Activated naive CD4-positive, alpha-beta T cell treated with anti-CD3 and anti-CD28 coated beads for 36 hours (primary cell): ENCODE measurements at regions of chr17 and their contacts with region 1.

Region 1: GRCh38 chr17:78378225-78379130 is at the start of gene PGS1:
- DNase-seq: peak; percentile 86
- H3K4me3 Mint-ChIP-seq: peak within 1 kb of the TSS; percentile 93
- H3K27ac Mint-ChIP-seq: peak within 1 kb of the TSS; percentile 99
- H3K4me1 Mint-ChIP-seq: peaks cover 63% of the 10 kb centered on the region
- H3K27me3 Mint-ChIP-seq: no peaks in the 10 kb centered on the region
- total RNA-seq, gene PGS1: 69.0 to 73.1 TPM

Region 2: GRCh38 chr17:78231991-78232858 is 146.3 kb before region 1 on chr17:
- CTCF ChIA-PET with region 1: no interaction called
- intact Hi-C with region 1: no loop called
- DNase-seq: peak; percentile 46
- H3K4me3 Mint-ChIP-seq: no peak overlapping the region
- H3K27ac Mint-ChIP-seq: no peak overlapping the region
- H3K4me1 Mint-ChIP-seq: peaks cover 7% of the 10 kb centered on the region
- H3K27me3 Mint-ChIP-seq: peaks cover 26% of the 10 kb centered on the region

Region 3: DNA sequence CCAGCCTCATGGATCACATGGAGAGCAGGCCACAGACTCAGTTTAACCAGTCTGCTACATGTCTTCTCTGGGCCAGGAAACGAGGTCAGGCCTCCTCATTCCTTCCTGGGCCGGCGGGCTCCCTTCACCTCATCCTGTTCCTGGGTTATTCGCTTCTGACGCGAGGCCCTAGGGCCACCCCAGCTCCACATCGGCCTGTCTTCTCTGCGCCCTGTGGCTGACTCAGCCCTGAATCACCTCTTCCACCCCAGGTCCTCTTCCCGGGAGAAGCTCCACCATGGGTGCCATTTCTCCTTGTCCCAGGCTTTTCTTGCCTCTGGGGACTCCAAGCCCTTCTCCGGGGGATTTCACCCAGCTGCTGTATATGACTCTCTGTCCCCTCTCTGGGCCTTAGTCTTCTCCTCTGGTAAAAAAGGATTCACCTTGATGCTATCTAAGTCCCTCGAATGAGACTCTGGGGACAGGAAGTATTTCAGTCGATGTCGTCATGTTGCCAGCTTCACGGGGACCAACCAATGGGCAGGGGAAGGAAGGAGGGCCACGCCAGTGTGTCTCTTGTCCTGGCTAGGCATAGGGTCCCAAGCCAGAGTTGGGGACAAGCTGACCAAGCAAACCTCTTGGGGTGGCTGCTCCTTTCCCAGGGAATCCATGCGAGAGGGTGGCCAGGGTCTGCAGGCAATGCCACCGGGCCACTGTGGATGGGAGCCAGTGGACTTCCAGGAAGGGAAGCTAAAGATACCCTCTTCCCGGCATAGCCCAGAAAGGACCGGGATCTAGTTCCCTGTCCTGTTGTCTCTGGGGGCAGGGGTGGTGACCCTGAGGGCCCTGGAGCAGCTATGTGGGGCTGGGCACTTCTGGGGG is 77.3 kb before region 1 on chr17:
- CTCF ChIA-PET with region 1: no interaction called
- intact Hi-C with region 1: no loop called
- DNase-seq: peak; percentile 14
- H3K4me3 Mint-ChIP-seq: no peak overlapping the region
- H3K27ac Mint-ChIP-seq: no peak overlapping the region
- H3K4me1 Mint-ChIP-seq: peaks cover 10% of the 10 kb centered on the region
- H3K27me3 Mint-ChIP-seq: no peaks in the 10 kb centered on the region

Region 4: GRCh38 chr17:78324391-78325075 is 53.9 kb before region 1 on chr17:
- CTCF ChIA-PET with region 1: no interaction called
- intact Hi-C with region 1: no loop called
- DNase-seq: peak; percentile 61
- H3K4me3 Mint-ChIP-seq: no peak overlapping the region
- H3K27ac Mint-ChIP-seq: peak overlapping the region; percentile 61
- H3K4me1 Mint-ChIP-seq: peaks cover 22% of the 10 kb centered on the region
- H3K27me3 Mint-ChIP-seq: no peaks in the 10 kb centered on the region

Region 5: GRCh38 chr17:78365561-78366108 is 12.8 kb before region 1 on chr17:
- CTCF ChIA-PET with region 1: interaction called, 35 read pairs
- intact Hi-C with region 1: loop called (anchors 1 kb)
- DNase-seq: no peak
- H3K4me3 Mint-ChIP-seq: no peak overlapping the region
- H3K27ac Mint-ChIP-seq: no peak overlapping the region
- H3K4me1 Mint-ChIP-seq: peaks cover 32% of the 10 kb centered on the region
- H3K27me3 Mint-ChIP-seq: peaks cover 5% of the 10 kb centered on the region

Region 6: GRCh38 chr17:78598013-78598471 is 219.6 kb after region 1 on chr17:
- CTCF ChIA-PET with region 1: no interaction called
- intact Hi-C with region 1: no loop called
- DNase-seq: no peak
- H3K4me3 Mint-ChIP-seq: no peak overlapping the region
- H3K27ac Mint-ChIP-seq: no peak overlapping the region
- H3K4me1 Mint-ChIP-seq: no peaks in the 10 kb centered on the region
- H3K27me3 Mint-ChIP-seq: no peaks in the 10 kb centered on the region